AG04449 (cell line): ENCODE measurements at regions of chr7 and their contacts with region 1.

Region 1: GRCh38 chr7:43582503-43583423 is at the start of gene STK17A:
- DNase-seq: no peak
- H3K4me3 ChIP-seq: peak within 1 kb of the TSS; percentile 85
- CTCF ChIP-seq: peak; percentile 100

Region 2: DNA sequence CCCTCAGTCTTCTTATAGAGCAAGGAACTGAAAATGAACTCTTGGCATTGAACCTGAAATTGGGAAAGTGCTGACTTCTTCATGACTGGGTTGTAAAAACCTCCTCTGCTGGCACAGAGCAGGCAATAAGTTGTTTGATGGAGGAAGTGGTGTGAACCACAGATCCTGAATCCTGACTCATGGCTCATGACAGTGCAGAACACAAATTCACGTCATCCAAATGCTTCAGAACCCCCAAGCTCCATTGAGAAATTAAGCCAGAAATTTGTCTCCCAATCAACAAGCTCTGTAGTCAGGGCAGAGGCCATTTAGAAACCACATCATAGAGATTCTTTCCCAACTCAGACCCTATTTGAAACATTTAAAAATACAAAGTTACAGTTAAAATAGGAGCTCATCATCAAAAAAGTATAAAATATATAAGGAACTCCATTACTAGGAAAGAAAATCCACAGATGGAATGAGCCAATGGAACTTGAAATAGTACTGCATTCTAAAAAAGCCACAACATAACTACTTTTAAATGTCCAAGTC is 10.2 kb before region 1 on chr7:
- CTCF ChIA-PET with region 1: interaction called, 109 read pairs
- POLR2A ChIA-PET with region 1: interaction called, 13 read pairs
- DNase-seq: peak; percentile 100
- H3K4me3 ChIP-seq: no peak overlapping the region
- CTCF ChIP-seq: no peak

Region 3: GRCh38 chr7:43621729-43622448 is 39.1 kb after region 1 on chr7:
- CTCF ChIA-PET with region 1: interaction called, 28 read pairs
- POLR2A ChIA-PET with region 1: interaction called, 4 read pairs
- DNase-seq: no peak
- H3K4me3 ChIP-seq: no peak overlapping the region
- CTCF ChIP-seq: no peak

Region 4: DNA sequence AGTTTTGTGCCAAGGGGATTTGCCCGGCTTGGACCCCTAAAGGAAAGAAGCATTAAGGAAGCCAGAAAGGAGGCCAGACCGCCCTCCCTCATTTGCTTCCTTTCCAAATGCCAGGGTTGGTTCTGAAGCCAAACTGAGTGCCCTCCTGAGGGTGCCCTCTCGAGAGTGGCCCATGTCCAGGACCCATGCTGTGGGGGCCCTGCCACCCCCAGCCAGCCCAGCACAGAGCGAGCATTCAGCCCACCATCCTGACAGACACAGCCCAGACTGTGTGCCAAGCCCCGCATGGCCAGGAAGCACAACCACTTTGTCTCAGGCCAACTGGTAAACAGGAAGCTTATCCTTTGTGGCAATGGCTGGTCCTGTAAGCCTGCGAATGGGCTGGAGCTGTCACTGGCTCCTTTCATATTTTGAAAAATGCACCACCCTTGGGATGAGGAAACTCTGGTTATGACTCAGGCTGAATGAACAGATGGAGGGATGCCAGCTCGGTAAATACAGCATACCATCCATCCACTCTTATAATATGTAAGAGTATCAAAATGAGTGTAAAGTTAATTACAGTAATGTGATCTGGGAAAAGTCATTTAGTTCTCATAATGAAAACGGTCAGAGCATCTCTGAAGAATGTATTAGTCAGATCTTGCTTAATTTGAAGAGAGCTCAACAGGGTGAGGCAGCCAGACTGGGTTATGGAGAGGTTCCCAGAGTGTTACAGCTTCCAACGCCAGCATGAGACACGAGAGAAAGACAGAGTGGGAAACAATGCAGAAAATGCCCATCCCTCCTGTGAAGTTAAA is 65.1 kb after region 1 on chr7:
- CTCF ChIA-PET with region 1: interaction called, 36 read pairs
- POLR2A ChIA-PET with region 1: interaction called, 16 read pairs
- DNase-seq: peak; percentile 99
- H3K4me3 ChIP-seq: peak overlapping the region; percentile 44
- CTCF ChIP-seq: no peak

Region 5: GRCh38 chr7:43700059-43700501 is 117.3 kb after region 1 on chr7:
- CTCF ChIA-PET with region 1: interaction called, 497 read pairs
- POLR2A ChIA-PET with region 1: interaction called, 51 read pairs
- DNase-seq: no peak
- H3K4me3 ChIP-seq: no peak overlapping the region
- CTCF ChIP-seq: peak; percentile 22

Region 6: GRCh38 chr7:43729214-43729923 is 146.6 kb after region 1 on chr7 and contains the start of gene COA1:
- CTCF ChIA-PET with region 1: interaction called, 28 read pairs
- POLR2A ChIA-PET with region 1: interaction called, 7 read pairs
- DNase-seq: peak; percentile 56
- H3K4me3 ChIP-seq: peak within 1 kb of the TSS; percentile 81
- CTCF ChIP-seq: no peak

Region 7: GRCh38 chr7:43747309-43748105 is 164.7 kb after region 1 on chr7:
- CTCF ChIA-PET with region 1: no interaction called
- POLR2A ChIA-PET with region 1: no interaction called
- DNase-seq: no peak
- H3K4me3 ChIP-seq: no peak overlapping the region
- CTCF ChIP-seq: no peak